Mammary epithelial cell (primary cell): ENCODE measurements at regions of chr22 and their contacts with region 1.

Region 1: GRCh38 chr22:39559454-39560105 is 11.0 kb upstream of the CACNA1I start:
- DNase-seq: no peak
- H3K4me3 ChIP-seq: no peak overlapping the region
- H3K27ac ChIP-seq: no peak overlapping the region
- H3K4me1 ChIP-seq: peaks cover 7% of the 10 kb centered on the region
- H3K27me3 ChIP-seq: peaks cover 12% of the 10 kb centered on the region
- CTCF ChIP-seq: peak; percentile 16 to 55

Region 2: DNA sequence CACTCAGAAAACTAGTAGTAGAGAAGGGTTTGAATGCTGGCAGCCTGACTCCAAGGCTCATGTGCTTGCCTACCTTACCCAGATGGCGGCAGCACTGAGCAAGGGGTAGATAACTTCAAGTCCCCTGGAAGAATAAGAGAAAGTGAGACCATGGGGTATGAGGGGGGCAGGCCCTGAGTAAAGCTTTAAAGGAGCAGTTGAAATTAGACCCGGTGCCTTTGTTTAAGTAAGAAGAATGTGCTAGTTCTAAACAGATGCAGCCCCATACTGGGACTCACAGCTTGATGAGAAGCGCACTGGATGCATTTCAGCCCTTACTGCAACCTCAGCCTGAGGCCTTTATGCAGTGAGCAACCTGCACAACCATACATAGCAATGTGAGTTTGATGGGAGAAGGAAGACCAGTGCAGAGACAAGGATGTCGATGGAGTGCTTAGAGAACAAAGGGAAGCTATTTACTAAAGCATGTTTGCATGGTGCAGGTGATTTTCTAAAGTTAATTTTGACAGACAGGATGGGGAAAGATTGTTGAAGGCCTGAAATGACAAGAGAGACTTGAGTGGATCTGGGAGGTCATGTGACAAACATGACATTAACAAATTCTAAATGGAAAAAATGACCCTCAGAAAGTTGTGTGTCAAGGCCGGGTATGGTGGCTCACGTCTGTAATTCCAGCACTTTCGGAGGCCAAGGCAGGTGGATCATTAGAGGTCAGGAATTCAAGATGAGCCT is 373.5 kb after region 1 on chr22:
- CTCF ChIA-PET with region 1: no interaction called
- dilution Hi-C with region 1: no loop called
- in situ Hi-C with region 1: no loop called
- intact Hi-C with region 1: loop called (anchors 5 kb)
- DNase-seq: no peak
- H3K4me3 ChIP-seq: no peak overlapping the region
- H3K27ac ChIP-seq: no peak overlapping the region
- H3K4me1 ChIP-seq: peaks cover 14% of the 10 kb centered on the region
- H3K27me3 ChIP-seq: no peaks in the 10 kb centered on the region
- CTCF ChIP-seq: peak; percentile 66 to 75

Region 3: DNA sequence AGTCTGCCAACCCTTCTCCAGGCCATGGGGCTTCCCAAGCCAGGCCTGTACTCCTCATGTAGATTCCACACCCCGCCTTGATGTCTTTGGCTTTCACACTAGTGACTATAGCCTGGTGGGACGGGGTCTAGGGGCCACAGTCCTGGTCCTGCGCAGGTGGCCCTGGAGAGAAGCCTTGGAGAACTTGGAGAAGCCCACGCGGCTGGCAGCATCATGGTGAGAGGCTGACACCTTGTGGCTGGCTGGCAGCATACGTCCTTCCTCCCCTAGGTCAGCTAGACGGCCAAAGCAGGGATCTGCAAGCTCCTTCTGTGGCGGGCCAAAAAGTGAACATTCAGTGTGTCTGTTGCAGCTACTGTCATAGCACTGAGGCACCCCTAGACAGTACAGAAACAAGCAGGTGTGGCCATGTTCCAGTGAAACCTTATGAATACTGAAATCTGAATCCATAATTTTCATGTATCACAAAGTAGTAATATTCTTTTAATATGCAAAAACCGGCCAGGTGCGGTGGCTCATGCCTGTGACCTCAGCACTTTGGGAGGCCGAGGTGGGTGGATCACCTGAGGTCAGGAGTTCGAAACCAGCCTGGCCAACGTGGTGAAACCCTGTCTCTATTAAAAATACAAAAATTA is 477.1 kb after region 1 on chr22:
- CTCF ChIA-PET with region 1: interaction called, 4 read pairs
- dilution Hi-C with region 1: no loop called
- in situ Hi-C with region 1: no loop called
- intact Hi-C with region 1: loop called (anchors 5 kb)
- DNase-seq: no peak
- H3K4me3 ChIP-seq: no peak overlapping the region
- H3K27ac ChIP-seq: no peak overlapping the region
- H3K4me1 ChIP-seq: peaks cover 23% of the 10 kb centered on the region
- H3K27me3 ChIP-seq: no peaks in the 10 kb centered on the region
- CTCF ChIP-seq: peak; percentile 47 to 65

Region 4: GRCh38 chr22:40363059-40363458 is 803.5 kb after region 1 on chr22:
- CTCF ChIA-PET with region 1: no interaction called
- dilution Hi-C with region 1: loop called (anchors 25 kb)
- in situ Hi-C with region 1: no loop called
- intact Hi-C with region 1: no loop called
- DNase-seq: no peak
- H3K4me3 ChIP-seq: no peak overlapping the region
- H3K27ac ChIP-seq: no peak overlapping the region
- H3K4me1 ChIP-seq: no peaks in the 10 kb centered on the region
- H3K27me3 ChIP-seq: no peaks in the 10 kb centered on the region
- CTCF ChIP-seq: no peak